Activated T-helper 1 cell treated with anti-CD3 and anti-CD28 coated beads, Interleukin-12 subunit alpha, Interleukin-12 subunit beta, Interleukin-2, Interleukin-4 antibody, amounts not matched to agents 30 ng/mL and 10 ng/mL and 1 ng/mL, durations not matched to agents 14 hours and 24 hours and 36 hours (primary cell): ENCODE measurements at regions of chr11 and their contacts with region 1.

Region 1: GRCh38 chr11:18588297-18589252 is at the start of gene UEVLD:
- DNase-seq: peak; percentile 68
- H3K4me3 Mint-ChIP-seq: no peak within 1 kb of the TSS
- H3K27ac Mint-ChIP-seq: no peak within 1 kb of the TSS
- H3K4me1 Mint-ChIP-seq: peaks cover 11% of the 10 kb centered on the region
- H3K27me3 Mint-ChIP-seq: no peaks in the 10 kb centered on the region
- total RNA-seq, gene UEVLD: 31.2 and 31.4 TPM in 2 replicates

Region 2: DNA sequence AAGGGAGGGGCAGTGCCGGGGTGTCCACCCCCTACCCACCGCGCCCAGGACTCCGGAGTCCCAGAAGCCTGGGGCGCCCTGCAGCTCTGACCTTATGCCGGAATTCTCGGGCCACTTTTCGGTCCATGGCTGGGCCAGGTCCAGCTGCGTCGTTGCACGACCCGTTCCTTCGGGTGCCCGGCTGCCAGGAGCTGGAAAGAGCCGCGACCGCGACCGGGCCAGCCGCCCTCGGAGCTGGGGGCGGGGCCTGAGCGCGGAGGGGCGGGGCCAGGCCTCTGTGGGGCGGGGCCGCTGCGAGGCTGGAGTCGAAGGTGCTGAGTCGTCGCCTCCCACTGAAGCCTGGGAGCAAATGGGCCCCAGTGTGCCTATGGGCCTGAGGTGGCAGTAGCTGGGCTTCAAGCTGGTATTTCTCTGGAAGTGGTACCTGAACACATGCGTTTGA is 1044.4 kb before region 1 on chr11 and contains the start of gene USH1C:
- intact Hi-C with region 1: no loop called
- DNase-seq: peak; percentile 8
- H3K4me3 Mint-ChIP-seq: no peak within 1 kb of the TSS
- H3K27ac Mint-ChIP-seq: no peak within 1 kb of the TSS
- H3K4me1 Mint-ChIP-seq: no peaks in the 10 kb centered on the region
- H3K27me3 Mint-ChIP-seq: peaks cover 41% of the 10 kb centered on the region
- total RNA-seq, gene USH1C: not detected in 2 replicates

Region 3: GRCh38 chr11:18395735-18396504 is 192.7 kb before region 1 on chr11:
- intact Hi-C with region 1: loop called (anchors 5 kb)
- DNase-seq: peak; percentile 96
- H3K4me3 Mint-ChIP-seq: peak overlapping the region; percentile 99
- H3K27ac Mint-ChIP-seq: peak overlapping the region; percentile 98
- H3K4me1 Mint-ChIP-seq: peaks cover 67% of the 10 kb centered on the region
- H3K27me3 Mint-ChIP-seq: no peaks in the 10 kb centered on the region

Region 4: DNA sequence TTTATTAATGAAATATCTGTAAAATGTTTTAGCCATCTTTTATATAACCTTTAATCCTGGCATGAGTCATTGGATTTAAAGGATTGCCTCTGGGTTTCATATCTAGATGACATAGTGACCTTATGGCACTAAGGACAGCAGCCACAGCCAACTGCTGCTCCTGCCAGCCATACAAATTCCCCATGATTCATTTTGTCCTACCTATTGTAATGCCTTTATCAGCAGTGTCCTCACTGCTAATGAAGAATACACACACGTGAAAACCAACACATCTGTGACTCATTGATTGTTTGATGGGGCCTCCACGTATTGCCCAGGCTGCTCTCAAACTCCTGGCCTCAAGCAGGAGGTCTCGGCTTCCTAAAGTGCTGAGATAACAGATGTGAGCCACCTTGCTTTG is 131.1 kb before region 1 on chr11:
- intact Hi-C with region 1: no loop called
- DNase-seq: no peak
- H3K4me3 Mint-ChIP-seq: no peak overlapping the region
- H3K27ac Mint-ChIP-seq: no peak overlapping the region
- H3K4me1 Mint-ChIP-seq: peaks cover 6% of the 10 kb centered on the region
- H3K27me3 Mint-ChIP-seq: peaks cover 9% of the 10 kb centered on the region

Region 5: GRCh38 chr11:18615628-18616392 is 27.2 kb after region 1 on chr11:
- intact Hi-C with region 1: loop called (anchors 1 kb)
- DNase-seq: no peak
- H3K4me3 Mint-ChIP-seq: peak overlapping the region; percentile 70
- H3K27ac Mint-ChIP-seq: peak overlapping the region; percentile 87
- H3K4me1 Mint-ChIP-seq: peaks cover 67% of the 10 kb centered on the region
- H3K27me3 Mint-ChIP-seq: no peaks in the 10 kb centered on the region

Region 6: DNA sequence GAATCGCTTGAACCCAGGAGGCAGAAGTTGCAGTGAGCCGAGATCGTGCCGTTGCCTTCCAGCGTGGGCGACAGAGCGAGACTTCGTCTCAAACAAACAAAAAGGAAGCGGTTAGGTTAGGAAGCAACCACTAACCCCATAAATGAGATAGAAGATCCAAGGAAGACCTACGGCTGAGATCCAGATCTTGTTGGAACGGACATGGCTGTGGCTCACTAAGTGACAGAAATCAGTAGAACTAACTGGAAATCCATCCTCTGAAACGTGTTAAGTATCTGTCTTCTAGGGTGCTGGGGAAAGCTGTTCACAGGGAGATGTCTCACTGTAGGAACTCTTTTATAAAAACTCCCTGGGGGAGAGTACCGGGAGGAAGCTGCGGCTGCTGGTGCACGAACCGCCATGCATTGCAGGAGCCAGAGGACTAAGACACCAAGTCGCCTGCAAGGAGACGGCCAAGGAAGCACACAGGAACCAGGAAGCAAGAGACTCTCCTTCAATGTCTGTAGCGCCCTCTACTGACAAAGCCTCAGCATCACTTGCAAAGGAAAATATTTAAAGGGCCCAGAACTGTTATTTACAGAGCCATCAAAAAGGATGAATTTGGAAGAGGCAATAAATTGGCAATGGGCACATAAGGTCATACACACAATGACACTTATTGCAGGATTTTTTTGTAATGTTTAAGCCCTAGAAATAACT is 62.4 kb after region 1 on chr11:
- intact Hi-C with region 1: loop called (anchors 1 kb)
- DNase-seq: peak; percentile 47
- H3K4me3 Mint-ChIP-seq: no peak overlapping the region
- H3K27ac Mint-ChIP-seq: no peak overlapping the region
- H3K4me1 Mint-ChIP-seq: peaks cover 13% of the 10 kb centered on the region
- H3K27me3 Mint-ChIP-seq: no peaks in the 10 kb centered on the region

Region 7: DNA sequence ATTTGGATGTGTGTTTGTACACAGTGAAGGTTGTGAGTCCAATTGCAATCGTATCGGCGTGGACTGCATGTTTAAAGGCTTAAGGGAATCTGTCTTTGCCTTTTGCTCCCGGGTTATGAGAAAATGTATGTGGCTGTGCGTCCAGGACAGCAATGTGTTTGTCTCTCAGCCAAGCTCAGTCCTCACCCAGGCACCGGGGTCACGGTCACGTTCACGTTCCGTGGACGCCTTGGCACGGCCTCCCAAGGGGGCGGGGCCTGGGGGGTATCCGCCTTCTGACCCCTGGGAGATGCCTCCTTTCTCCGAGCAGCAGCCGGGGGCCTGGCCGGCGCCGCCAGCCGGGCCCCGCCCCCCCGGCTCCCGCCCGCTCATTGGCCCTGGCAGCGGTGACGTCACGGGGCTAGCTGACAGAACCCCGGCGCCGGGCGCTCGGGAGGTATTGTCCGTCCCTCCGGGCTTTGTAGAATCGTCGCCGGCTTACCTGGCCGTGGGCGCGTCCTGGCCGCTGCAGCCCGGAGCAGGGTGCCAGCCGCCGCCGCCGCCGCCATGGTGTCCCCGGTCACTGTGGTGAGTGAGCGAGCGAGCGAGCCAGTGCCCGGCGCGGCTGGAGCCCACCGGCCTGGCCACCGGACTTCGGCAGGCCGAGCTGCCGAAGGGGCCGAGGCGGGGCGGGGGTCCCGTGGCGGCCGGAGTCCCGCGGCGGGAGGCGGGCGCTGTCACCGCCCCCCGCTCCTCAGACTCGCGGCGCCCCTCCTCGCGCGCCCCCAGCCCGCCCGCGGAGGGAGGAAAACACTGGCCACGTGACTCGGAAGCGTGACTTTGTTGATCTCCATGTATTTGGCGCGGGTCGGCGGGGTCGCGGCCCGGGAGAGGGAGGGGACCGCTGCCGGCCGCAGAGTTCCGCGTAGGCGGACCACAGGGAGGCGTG is 110.0 kb after region 1 on chr11 and contains the start of gene TMEM86A:
- intact Hi-C with region 1: loop called (anchors 1 kb)
- DNase-seq: peak; percentile 89
- H3K4me3 Mint-ChIP-seq: peak within 1 kb of the TSS; percentile 83
- H3K27ac Mint-ChIP-seq: peak within 1 kb of the TSS; percentile 65
- H3K4me1 Mint-ChIP-seq: peaks cover 25% of the 10 kb centered on the region
- H3K27me3 Mint-ChIP-seq: peaks cover 22% of the 10 kb centered on the region
- total RNA-seq, gene TMEM86A: 0.52 and 0.93 TPM in 2 replicates

Region 8: DNA sequence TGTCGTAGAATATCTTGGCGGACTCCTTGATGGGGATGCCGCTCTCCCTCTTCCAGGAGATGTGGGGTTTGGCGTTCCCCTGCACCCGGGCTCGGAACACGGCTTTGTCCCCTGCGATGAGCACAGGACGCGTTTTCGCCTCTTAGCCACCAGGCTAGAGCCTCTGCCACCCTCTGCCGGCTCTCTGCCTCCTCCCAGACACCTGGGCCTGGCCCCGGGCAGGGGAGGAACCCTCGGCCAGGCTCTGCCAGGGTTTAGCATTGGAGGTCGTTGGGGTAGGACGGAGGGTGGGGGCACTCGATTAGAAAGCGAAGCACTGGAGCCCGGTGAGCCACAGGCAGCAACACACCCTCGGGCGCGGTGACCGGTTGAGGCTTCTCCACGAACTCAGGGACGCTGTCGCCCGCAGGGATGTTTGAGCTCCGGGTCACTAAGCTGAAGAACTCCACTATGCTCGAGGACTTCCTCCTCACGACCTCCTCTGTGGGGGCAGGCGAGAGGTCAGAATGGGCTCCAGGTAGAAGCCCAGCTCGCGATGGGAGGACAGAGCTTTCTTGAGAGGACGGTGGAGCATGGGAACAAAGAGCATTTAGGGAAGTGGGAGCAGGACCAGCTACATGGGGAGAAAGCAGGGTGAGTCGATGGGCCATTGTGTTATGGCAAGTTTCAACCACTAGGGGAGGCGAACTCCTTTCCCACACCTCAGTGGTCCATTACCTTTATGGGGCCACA is 133.2 kb after region 1 on chr11:
- intact Hi-C with region 1: loop called (anchors 1 kb)
- DNase-seq: peak; percentile 38
- H3K4me3 Mint-ChIP-seq: peak overlapping the region; percentile 87
- H3K27ac Mint-ChIP-seq: no peak overlapping the region
- H3K4me1 Mint-ChIP-seq: peaks cover 21% of the 10 kb centered on the region
- H3K27me3 Mint-ChIP-seq: peaks cover 31% of the 10 kb centered on the region